ENCODE measurements at regions of chr3 and their contacts with region 1.

Region 1: GRCh38 chr3:186953011-186953487 is 22.7 kb downstream of the ST6GAL1 start:
- DNase-seq: peak; percentile 27
- H3K4me3 Mint-ChIP-seq: peak overlapping the region; percentile 4
- H3K27ac Mint-ChIP-seq: peak overlapping the region; percentile 60
- H3K4me1 Mint-ChIP-seq: peaks cover 67% of the 10 kb centered on the region
- H3K27me3 Mint-ChIP-seq: no peaks in the 10 kb centered on the region

Region 2: GRCh38 chr3:186783073-186783730 is 169.8 kb before region 1 on chr3 and contains the start of gene EIF4A2:
- CTCF ChIA-PET with region 1: no interaction called
- intact Hi-C with region 1: no loop called
- DNase-seq: peak; percentile 91
- H3K4me3 Mint-ChIP-seq: peak within 1 kb of the TSS; percentile 99
- H3K27ac Mint-ChIP-seq: peak within 1 kb of the TSS; percentile 100
- H3K4me1 Mint-ChIP-seq: peaks cover 29% of the 10 kb centered on the region
- H3K27me3 Mint-ChIP-seq: peaks cover 3% of the 10 kb centered on the region
- total RNA-seq, gene EIF4A2: 445 to 469 TPM

Region 3: DNA sequence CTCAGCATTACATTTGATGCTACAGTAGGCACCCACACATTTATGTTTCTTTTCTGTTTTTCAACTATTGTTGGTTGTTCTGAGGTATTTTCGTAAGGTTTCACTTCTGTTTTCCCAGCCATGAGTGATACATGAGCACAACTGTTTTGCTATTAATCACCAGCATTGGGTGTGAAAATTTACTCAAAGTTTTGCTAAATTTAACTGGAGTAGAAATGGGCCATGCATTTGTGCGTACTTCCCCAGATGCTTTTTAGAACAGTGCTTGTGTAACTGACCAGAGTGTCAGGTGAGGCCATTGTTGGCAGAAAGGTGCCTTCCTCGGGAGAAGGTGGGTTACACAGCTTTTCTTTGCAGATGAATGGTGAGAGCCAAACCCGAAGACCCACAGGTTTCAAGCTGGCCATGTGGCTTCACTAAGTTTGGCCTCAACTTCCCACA is 47.7 kb after region 1 on chr3:
- CTCF ChIA-PET with region 1: no interaction called
- intact Hi-C with region 1: loop called (anchors 2 kb)
- DNase-seq: peak; percentile 76
- H3K4me3 Mint-ChIP-seq: peak overlapping the region; percentile 25
- H3K27ac Mint-ChIP-seq: peak overlapping the region; percentile 90
- H3K4me1 Mint-ChIP-seq: peaks cover 76% of the 10 kb centered on the region
- H3K27me3 Mint-ChIP-seq: no peaks in the 10 kb centered on the region